Mammary epithelial cell (primary cell): ENCODE measurements at regions of chr1 and their contacts with region 1.

Region 1: DNA sequence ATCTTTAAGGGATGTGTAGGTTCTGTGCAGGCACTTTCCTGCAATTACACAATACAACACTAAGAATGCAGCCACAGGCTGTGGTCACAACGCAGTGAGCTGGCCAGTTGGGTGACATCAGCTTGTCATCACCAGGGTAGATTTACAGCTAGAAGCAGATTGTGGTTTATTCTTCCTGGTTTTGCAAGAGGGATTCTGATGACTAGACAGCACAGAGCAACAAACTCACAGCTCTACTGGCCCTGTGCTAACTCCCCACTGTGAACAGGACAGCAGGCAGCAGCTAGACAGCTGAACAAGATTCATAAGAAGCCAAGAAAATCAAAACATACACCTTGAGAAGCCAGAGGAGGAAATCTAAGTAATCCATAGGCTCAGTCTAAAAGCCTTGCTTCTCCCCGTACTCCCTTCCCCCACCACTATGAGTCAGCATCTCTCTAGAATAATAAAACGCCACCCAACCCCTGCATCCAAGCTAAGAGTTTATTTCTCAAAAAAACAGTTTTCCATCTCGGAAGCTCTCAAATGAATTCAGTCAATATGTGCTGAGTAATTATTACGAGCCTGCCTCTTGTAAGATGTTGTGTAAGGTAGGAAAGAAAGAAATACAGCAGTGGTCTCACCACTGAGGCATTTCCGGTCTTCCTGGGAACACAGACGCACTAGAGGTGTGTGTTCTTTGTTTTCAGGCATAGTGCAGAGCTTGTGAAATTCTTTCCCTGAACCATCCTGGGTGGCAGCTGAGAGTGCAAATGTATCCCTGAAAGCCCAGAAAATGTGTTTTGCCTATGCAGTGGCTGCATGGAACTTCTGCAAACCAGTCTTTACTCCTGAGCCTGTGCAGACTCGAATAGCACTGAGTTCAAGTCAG is 162.8 kb downstream of the NTPCR start:
- DNase-seq: peak; percentile 99
- H3K4me3 ChIP-seq: peak overlapping the region in 2 of 3 experiments; percentile 2 to 37
- H3K27ac ChIP-seq: peak overlapping the region; percentile 100
- H3K4me1 ChIP-seq: peaks cover 38% of the 10 kb centered on the region
- H3K27me3 ChIP-seq: no peaks in the 10 kb centered on the region
- CTCF ChIP-seq: no peak

Region 2: DNA sequence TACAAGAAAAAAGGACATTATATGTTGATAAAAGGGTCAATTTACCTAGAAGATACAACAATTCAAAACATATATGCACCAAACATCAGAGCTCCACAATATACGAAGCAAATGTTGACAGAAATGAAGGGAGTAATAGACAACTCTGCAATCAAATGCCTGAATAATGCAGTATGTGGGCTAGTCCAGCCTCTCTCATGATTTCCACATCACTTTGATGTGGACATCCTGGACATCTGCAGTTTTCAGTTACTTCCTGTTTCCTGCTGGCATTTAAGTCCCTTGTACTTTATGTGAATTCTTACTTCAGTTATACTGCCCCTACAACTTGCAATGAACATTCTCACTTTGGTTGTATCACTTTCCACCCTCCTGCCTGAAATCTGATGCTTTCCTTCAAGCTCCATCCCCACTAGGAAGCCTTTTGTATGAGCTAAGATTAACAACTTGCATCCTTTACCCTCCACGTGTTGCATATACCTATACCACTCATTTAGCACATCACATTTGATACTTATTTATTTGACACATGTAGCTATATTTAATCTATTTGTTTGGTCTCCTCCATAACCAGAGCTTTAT is 1449.9 kb before region 1 on chr1:
- CTCF ChIA-PET with region 1: no interaction called
- dilution Hi-C with region 1: no loop called
- in situ Hi-C with region 1: no loop called
- intact Hi-C with region 1: no loop called
- DNase-seq: no peak
- H3K4me3 ChIP-seq: no peak overlapping the region
- H3K27ac ChIP-seq: no peak overlapping the region
- H3K4me1 ChIP-seq: no peaks in the 10 kb centered on the region
- H3K27me3 ChIP-seq: peaks cover 2% of the 10 kb centered on the region
- CTCF ChIP-seq: no peak

Region 3: GRCh38 chr1:232868793-232869491 is 244.3 kb before region 1 on chr1:
- CTCF ChIA-PET with region 1: no interaction called
- dilution Hi-C with region 1: no loop called
- in situ Hi-C with region 1: no loop called
- intact Hi-C with region 1: loop called (anchors 2 kb)
- DNase-seq: peak; percentile 90
- H3K4me3 ChIP-seq: no peak overlapping the region
- H3K27ac ChIP-seq: peak overlapping the region; percentile 74
- H3K4me1 ChIP-seq: peaks cover 30% of the 10 kb centered on the region
- H3K27me3 ChIP-seq: no peaks in the 10 kb centered on the region
- CTCF ChIP-seq: no peak

Region 4: GRCh38 chr1:232950197-232951176 is 162.8 kb before region 1 on chr1 and contains the start of gene NTPCR:
- CTCF ChIA-PET with region 1: no interaction called
- dilution Hi-C with region 1: no loop called
- in situ Hi-C with region 1: no loop called
- intact Hi-C with region 1: loop called (anchors 1 kb)
- DNase-seq: peak; percentile 86
- H3K4me3 ChIP-seq: peak within 1 kb of the TSS; percentile 78 to 94 (median 86)
- H3K27ac ChIP-seq: peak within 1 kb of the TSS; percentile 64
- H3K4me1 ChIP-seq: peaks cover 26% of the 10 kb centered on the region
- H3K27me3 ChIP-seq: no peaks in the 10 kb centered on the region
- CTCF ChIP-seq: peak in 1 of 2 donors; percentile 15
- total RNA-seq, gene NTPCR: 15.3 to 47.0 TPM

Region 5: GRCh38 chr1:233025157-233025915 is 87.9 kb before region 1 on chr1:
- CTCF ChIA-PET with region 1: no interaction called
- dilution Hi-C with region 1: no loop called
- in situ Hi-C with region 1: no loop called
- intact Hi-C with region 1: loop called (anchors 5 kb)
- DNase-seq: peak; percentile 82
- H3K4me3 ChIP-seq: no peak overlapping the region
- H3K27ac ChIP-seq: no peak overlapping the region
- H3K4me1 ChIP-seq: peaks cover 17% of the 10 kb centered on the region
- H3K27me3 ChIP-seq: no peaks in the 10 kb centered on the region
- CTCF ChIP-seq: peak in 1 of 2 donors; percentile 11

Region 6: DNA sequence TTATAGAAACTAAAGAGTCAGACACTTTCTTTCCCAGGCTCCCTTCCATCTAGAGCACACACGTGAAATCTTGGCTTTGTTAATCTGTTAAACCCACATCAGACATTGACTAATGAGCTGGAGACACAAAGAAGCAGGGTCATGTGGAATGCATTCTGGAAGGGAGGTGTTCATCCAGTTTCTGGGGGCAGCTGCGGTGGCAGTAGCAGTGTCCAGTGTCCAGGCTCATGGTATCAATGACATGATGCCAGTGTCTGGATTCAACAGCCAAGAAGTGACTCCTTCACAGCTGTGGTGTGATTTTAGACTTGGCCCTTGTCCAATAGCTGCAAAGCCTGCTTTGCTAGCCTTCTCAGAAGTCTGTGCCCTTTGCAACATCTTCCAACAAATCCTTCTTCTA is 67.7 kb before region 1 on chr1:
- CTCF ChIA-PET with region 1: no interaction called
- dilution Hi-C with region 1: no loop called
- in situ Hi-C with region 1: no loop called
- intact Hi-C with region 1: no loop called
- DNase-seq: no peak
- H3K4me3 ChIP-seq: no peak overlapping the region
- H3K27ac ChIP-seq: no peak overlapping the region
- H3K4me1 ChIP-seq: no peaks in the 10 kb centered on the region
- H3K27me3 ChIP-seq: no peaks in the 10 kb centered on the region
- CTCF ChIP-seq: no peak

Region 7: DNA sequence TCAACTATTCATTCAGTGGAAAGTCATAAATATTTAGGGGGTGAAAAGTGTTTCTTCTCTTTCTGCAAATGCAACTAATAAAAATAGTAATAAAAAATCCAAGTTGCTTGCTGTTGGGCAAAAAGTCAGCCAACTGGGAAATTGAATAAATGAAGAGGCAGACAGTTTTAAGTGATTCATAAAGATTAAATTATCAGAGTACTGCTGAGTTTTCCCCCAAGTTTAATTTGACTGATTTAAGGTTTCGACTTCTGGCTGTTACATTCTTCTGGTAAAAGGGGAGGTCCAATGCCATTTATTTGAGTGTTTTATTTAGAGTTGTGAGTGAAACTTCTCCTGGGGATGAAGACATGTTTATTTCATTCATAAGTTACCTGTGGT is 37.3 kb before region 1 on chr1:
- CTCF ChIA-PET with region 1: no interaction called
- dilution Hi-C with region 1: no loop called
- in situ Hi-C with region 1: no loop called
- intact Hi-C with region 1: loop called (anchors 2 kb)
- DNase-seq: no peak
- H3K4me3 ChIP-seq: no peak overlapping the region
- H3K27ac ChIP-seq: no peak overlapping the region
- H3K4me1 ChIP-seq: peaks cover 5% of the 10 kb centered on the region
- H3K27me3 ChIP-seq: no peaks in the 10 kb centered on the region
- CTCF ChIP-seq: no peak

Region 8: DNA sequence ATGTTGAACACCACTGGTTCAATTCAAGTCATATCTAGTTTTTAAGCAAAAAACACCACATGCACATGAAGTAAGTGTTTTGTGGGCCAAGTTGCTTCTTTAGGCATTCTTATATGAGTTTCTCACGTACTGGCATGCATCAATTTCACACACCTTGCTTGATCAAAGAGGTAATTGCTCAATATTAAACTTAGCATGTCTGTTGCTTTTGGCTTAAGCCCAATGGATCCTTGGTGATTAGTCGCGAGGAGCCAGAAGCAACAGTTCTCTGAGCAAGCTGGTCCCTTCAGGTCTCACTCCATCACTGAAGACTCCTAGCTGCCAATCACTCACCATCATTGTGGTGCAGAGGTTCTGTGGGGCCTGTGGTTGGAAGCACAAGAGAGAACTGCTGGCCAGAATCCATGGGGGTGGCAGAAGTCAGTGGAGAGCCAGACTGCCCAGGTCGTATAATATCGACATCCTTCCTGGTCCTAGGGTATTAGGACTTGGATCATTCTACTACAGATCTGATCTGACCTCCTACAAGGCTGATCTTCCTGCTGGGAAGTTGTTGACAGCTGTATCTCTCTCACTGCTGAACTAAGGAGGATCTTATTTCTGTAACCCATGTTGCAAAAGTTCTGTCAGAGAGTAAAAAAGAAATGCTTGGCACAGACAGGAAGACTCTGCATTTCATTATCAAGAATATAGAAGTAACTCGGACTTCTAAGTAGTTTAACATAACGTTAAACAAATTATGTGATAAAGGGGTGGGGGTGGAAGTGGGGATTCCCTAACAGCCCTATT is 22.3 kb before region 1 on chr1:
- CTCF ChIA-PET with region 1: no interaction called
- dilution Hi-C with region 1: no loop called
- in situ Hi-C with region 1: no loop called
- intact Hi-C with region 1: loop called (anchors 2 kb)
- DNase-seq: peak; percentile 68
- H3K4me3 ChIP-seq: no peak overlapping the region
- H3K27ac ChIP-seq: no peak overlapping the region
- H3K4me1 ChIP-seq: peaks cover 2% of the 10 kb centered on the region
- H3K27me3 ChIP-seq: no peaks in the 10 kb centered on the region
- CTCF ChIP-seq: no peak

Region 9: GRCh38 chr1:233295237-233295974 is 182.2 kb after region 1 on chr1 and contains the start of gene PCNX2:
- CTCF ChIA-PET with region 1: no interaction called
- dilution Hi-C with region 1: no loop called
- in situ Hi-C with region 1: no loop called
- intact Hi-C with region 1: loop called (anchors 1 kb)
- DNase-seq: peak; percentile 68
- H3K4me3 ChIP-seq: peak within 1 kb of the TSS; percentile 98 to 100 (median 99)
- H3K27ac ChIP-seq: peak within 1 kb of the TSS; percentile 90
- H3K4me1 ChIP-seq: peaks cover 32% of the 10 kb centered on the region
- H3K27me3 ChIP-seq: no peaks in the 10 kb centered on the region
- CTCF ChIP-seq: no peak
- total RNA-seq, gene PCNX2: 41.1 to 67.5 TPM